Mammary epithelial cell (primary cell): ENCODE measurements at regions of chr22 and their contacts with region 1.

Region 1: GRCh38 chr22:25777870-25778269 is 35.9 kb downstream of the MYO18B start:
- DNase-seq: peak; percentile 50
- H3K4me3 ChIP-seq: no peak overlapping the region
- H3K27ac ChIP-seq: no peak overlapping the region
- H3K4me1 ChIP-seq: no peaks in the 10 kb centered on the region
- H3K27me3 ChIP-seq: no peaks in the 10 kb centered on the region
- CTCF ChIP-seq: peak; percentile 35 to 58

Region 2: DNA sequence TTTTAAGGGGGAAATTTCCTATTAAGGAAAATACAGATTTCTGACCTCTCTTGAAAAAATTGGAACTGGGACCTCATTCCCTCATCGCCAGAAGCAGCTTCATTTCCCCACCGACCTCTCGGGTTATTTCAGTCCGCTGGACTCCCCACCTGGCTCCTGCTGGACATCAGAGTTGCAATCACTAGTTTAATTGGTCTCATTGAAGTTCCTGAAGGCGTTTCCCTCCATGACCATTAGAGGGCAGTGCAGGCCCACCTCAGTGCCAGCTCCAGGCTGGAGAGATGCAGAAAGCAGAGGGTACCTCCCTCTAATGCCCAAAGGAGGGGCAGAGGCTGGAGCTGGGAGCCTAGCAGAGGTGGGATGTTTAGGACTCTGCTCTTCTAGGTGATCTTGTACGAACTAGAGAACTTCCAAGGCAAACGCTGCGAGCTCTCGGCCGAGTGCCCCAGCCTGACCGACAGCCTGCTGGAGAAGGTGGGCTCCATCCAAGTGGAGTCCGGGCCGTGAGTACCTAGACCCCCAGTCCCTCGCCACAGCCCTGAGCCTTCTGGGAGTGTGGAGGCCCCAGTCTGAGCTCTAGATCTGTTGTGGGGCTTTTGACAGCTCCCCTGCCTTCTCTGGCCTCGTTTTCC is 575.5 kb before region 1 on chr22:
- CTCF ChIA-PET with region 1: no interaction called
- dilution Hi-C with region 1: no loop called
- in situ Hi-C with region 1: no loop called
- intact Hi-C with region 1: loop called (anchors 1 kb)
- DNase-seq: peak; percentile 33
- H3K4me3 ChIP-seq: no peak overlapping the region
- H3K27ac ChIP-seq: no peak overlapping the region
- H3K4me1 ChIP-seq: no peaks in the 10 kb centered on the region
- H3K27me3 ChIP-seq: no peaks in the 10 kb centered on the region
- CTCF ChIP-seq: peak; percentile 84 to 92

Region 3: DNA sequence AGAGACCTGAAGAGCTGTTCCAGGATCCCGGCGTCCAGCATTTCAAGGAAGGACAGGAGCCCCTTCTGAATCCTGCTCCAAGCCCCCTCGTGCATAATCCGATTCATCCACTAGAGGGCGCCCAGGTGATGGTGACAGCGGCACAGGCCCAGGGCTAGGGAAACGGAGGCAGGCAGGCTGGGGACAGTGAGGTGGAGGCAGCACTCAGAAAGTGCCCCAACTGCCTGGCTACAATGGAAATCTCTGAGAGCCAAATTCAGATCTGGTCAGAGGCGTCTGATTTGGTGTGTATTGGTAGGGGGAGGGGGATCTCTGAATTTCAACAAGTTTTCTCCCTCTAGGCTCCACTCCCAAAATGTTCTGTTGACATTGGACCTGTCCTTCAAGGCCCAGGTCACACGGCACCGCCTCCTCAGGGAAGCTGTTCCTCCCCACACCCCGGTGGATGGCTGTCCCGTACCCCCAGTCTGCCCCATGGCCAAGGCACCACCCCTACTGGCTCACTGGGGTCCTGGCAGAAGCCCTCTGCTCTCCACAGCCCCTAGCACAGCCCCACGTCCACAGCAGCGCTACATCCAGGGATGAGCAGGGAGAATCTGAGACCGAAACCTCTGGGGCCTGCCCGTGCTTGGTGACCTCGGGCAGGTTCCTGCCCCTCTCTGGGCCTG is 415.5 kb before region 1 on chr22:
- CTCF ChIA-PET with region 1: no interaction called
- dilution Hi-C with region 1: no loop called
- in situ Hi-C with region 1: no loop called
- intact Hi-C with region 1: loop called (anchors 1 kb)
- DNase-seq: no peak
- H3K4me3 ChIP-seq: no peak overlapping the region
- H3K27ac ChIP-seq: no peak overlapping the region
- H3K4me1 ChIP-seq: no peaks in the 10 kb centered on the region
- H3K27me3 ChIP-seq: no peaks in the 10 kb centered on the region
- CTCF ChIP-seq: peak; percentile 85 to 89

Region 4: GRCh38 chr22:25465949-25466348 is 311.9 kb before region 1 on chr22:
- CTCF ChIA-PET with region 1: no interaction called
- dilution Hi-C with region 1: no loop called
- in situ Hi-C with region 1: loop called (anchors 5 kb)
- intact Hi-C with region 1: loop called (anchors 1 kb)
- DNase-seq: no peak
- H3K4me3 ChIP-seq: no peak overlapping the region
- H3K27ac ChIP-seq: no peak overlapping the region
- H3K4me1 ChIP-seq: no peaks in the 10 kb centered on the region
- H3K27me3 ChIP-seq: no peaks in the 10 kb centered on the region
- CTCF ChIP-seq: no peak

Region 5: GRCh38 chr22:26321469-26321913 is 543.6 kb after region 1 on chr22:
- CTCF ChIA-PET with region 1: no interaction called
- dilution Hi-C with region 1: loop called (anchors 5 kb)
- in situ Hi-C with region 1: no loop called
- intact Hi-C with region 1: no loop called
- DNase-seq: no peak
- H3K4me3 ChIP-seq: no peak overlapping the region
- H3K27ac ChIP-seq: no peak overlapping the region
- H3K4me1 ChIP-seq: peaks cover 17% of the 10 kb centered on the region
- H3K27me3 ChIP-seq: no peaks in the 10 kb centered on the region
- CTCF ChIP-seq: no peak

Region 6: GRCh38 chr22:26364066-26365015 is 586.5 kb after region 1 on chr22:
- CTCF ChIA-PET with region 1: no interaction called
- dilution Hi-C with region 1: no loop called
- in situ Hi-C with region 1: no loop called
- intact Hi-C with region 1: loop called (anchors 1 kb)
- DNase-seq: peak; percentile 64
- H3K4me3 ChIP-seq: no peak overlapping the region
- H3K27ac ChIP-seq: no peak overlapping the region
- H3K4me1 ChIP-seq: peaks cover 7% of the 10 kb centered on the region
- H3K27me3 ChIP-seq: no peaks in the 10 kb centered on the region
- CTCF ChIP-seq: peak; percentile 62 to 79